ENCODE measurements at regions of chr17 and their contacts with region 1.

Region 1: GRCh38 chr17:64506576-64507477 is at the start of gene CEP95:
- DNase-seq: peak; percentile 98
- H3K4me3 Mint-ChIP-seq: peak within 1 kb of the TSS; percentile 99
- H3K27ac Mint-ChIP-seq: peak within 1 kb of the TSS; percentile 100
- H3K4me1 Mint-ChIP-seq: peaks cover 40% of the 10 kb centered on the region
- H3K27me3 Mint-ChIP-seq: no peaks in the 10 kb centered on the region
- total RNA-seq, gene CEP95: 42.9 and 48.3 TPM in 2 replicates

Region 2: DNA sequence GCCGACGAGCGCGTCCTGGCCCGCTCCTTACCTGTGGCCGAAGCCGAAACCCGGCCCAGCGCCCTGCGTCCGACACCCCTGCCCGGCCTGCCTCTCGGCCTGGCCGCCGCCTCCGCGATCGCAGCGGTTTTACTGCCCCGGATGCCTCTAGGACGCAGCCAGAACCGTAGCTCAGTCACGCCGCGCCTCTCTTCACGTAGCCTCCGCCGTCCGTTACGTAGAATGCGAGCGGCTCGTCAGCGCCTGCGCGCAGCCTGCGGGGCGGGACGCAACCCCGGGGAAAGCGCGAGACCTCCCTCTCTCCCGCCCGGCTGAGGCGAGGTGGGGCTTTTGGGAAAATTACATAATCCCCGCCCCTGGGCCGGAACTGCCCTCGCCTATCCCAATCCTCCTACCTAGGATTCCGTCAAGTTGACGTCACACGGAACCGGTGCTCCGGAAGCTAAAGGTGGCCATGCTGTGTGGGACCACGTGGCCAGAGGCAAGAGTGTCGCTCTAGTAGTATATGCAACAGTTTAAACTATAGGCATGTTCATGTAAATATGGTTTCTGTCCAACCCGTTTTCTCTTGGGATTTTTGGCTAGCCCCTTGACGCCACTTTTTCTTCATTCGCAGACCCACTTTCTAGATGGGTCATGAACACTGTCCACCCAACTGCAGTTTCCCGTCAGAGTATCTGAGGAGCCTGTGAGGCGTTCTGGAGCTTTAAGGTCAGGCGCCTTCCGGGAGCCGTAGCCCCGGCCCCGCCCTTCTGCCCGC is 733.3 kb before region 1 on chr17 and contains the start of gene CCDC47:
- intact Hi-C with region 1: loop called (anchors 1 kb)
- DNase-seq: peak; percentile 100
- H3K4me3 Mint-ChIP-seq: peak within 1 kb of the TSS; percentile 99
- H3K27ac Mint-ChIP-seq: peak within 1 kb of the TSS; percentile 100
- H3K4me1 Mint-ChIP-seq: peaks cover 44% of the 10 kb centered on the region
- H3K27me3 Mint-ChIP-seq: peaks cover 2% of the 10 kb centered on the region
- total RNA-seq, gene CCDC47: 81.8 and 82.9 TPM in 2 replicates

Region 3: DNA sequence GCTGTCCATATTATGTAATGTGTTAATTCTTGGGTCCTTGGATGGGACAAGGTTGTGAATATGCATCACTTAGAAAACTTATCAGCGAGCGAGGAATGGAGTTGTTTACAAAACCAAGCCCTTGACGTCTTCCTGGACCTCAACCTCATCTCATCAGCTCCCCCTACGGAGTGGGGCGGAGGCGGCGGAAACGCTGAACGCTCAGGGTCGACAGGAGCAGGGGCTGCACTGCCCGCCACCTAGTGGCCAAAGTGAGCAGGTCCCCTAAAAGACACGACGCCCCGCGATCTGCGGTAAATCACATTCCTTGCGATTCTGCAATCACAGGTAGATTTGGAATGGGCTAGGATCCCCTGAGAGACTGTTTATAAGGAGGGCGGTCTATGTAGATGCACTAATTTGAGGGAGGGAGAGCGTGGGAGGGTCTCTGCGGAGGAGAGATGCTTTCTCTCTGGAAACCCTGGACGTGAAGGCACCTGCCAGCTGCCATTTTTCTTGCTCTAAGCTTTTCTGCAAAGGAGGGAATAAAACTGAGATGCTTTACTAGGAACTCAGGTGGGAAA is 481.0 kb before region 1 on chr17:
- intact Hi-C with region 1: loop called (anchors 10 kb)
- DNase-seq: peak; percentile 97
- H3K4me3 Mint-ChIP-seq: peak overlapping the region; percentile 73
- H3K27ac Mint-ChIP-seq: peak overlapping the region; percentile 85
- H3K4me1 Mint-ChIP-seq: peaks cover 62% of the 10 kb centered on the region
- H3K27me3 Mint-ChIP-seq: no peaks in the 10 kb centered on the region

Region 4: GRCh38 chr17:64491034-64491859 is 15.6 kb before region 1 on chr17:
- intact Hi-C with region 1: no loop called
- DNase-seq: peak; percentile 90
- H3K4me3 Mint-ChIP-seq: no peak overlapping the region
- H3K27ac Mint-ChIP-seq: no peak overlapping the region
- H3K4me1 Mint-ChIP-seq: peaks cover 25% of the 10 kb centered on the region
- H3K27me3 Mint-ChIP-seq: no peaks in the 10 kb centered on the region

Region 5: DNA sequence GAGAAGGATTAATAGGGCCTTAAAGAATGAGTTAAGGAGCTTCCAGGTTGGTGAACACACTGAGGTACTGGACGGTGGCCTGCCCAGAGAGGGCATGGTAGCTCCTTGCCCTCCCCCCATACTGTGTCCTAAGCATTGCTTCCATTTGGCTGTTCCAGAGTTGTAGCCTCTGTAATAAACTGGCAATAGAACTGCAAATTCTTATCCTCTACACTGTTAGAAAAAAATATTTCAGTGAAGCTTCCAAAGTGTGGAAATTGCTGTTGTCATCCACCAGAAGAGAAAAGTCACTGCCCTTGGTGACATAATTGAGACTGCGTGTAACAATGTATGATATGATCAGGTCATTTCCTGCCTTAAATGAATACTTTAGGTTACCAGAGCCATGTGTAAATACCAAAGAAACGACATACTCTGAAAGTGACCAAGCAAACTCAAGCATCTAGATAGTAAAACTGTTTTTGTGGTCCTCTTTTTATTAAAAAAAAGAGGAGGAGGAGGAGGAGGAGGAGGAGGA is 65.9 kb after region 1 on chr17:
- intact Hi-C with region 1: loop called (anchors 2 kb)
- DNase-seq: peak; percentile 64
- H3K4me3 Mint-ChIP-seq: peak overlapping the region; percentile 2
- H3K27ac Mint-ChIP-seq: peak overlapping the region; percentile 84
- H3K4me1 Mint-ChIP-seq: peaks cover 10% of the 10 kb centered on the region
- H3K27me3 Mint-ChIP-seq: no peaks in the 10 kb centered on the region

Region 6: GRCh38 chr17:64653325-64653984 is 146.6 kb after region 1 on chr17:
- intact Hi-C with region 1: loop called (anchors 1 kb)
- DNase-seq: no peak
- H3K4me3 Mint-ChIP-seq: no peak overlapping the region
- H3K27ac Mint-ChIP-seq: no peak overlapping the region
- H3K4me1 Mint-ChIP-seq: peaks cover 26% of the 10 kb centered on the region
- H3K27me3 Mint-ChIP-seq: no peaks in the 10 kb centered on the region

Region 7: GRCh38 chr17:64975329-64976087 is 468.7 kb after region 1 on chr17:
- intact Hi-C with region 1: loop called (anchors 10 kb)
- DNase-seq: peak; percentile 100
- H3K4me3 Mint-ChIP-seq: peak overlapping the region; percentile 76
- H3K27ac Mint-ChIP-seq: peak overlapping the region; percentile 93
- H3K4me1 Mint-ChIP-seq: peaks cover 47% of the 10 kb centered on the region
- H3K27me3 Mint-ChIP-seq: no peaks in the 10 kb centered on the region